ENCODE measurements at regions of chr21 and their contacts with region 1.

Region 1: GRCh38 chr21:33324291-33325221 is at the start of gene IFNAR1:
- DNase-seq: peak; percentile 99 to 100 (median 100)
- ATAC-seq: peak; percentile 95
- H3K4me3 ChIP-seq: peak within 1 kb of the TSS; percentile 75
- H3K27ac ChIP-seq: peak within 1 kb of the TSS; percentile 91
- H3K4me1 ChIP-seq: peaks cover 13 to 21% of the 10 kb centered on the region in 2 experiments; a peak in 3 of 5 replicates
- H3K27me3 ChIP-seq: no peaks in the 10 kb centered on the region
- CTCF ChIP-seq: peak in 2 of 3 experiments; percentile 14 to 16; a peak in 2 of 6 replicates
- EP300 ChIP-seq: no peak
- POLR2A ChIP-seq: peak; percentile 98
- RAD21 ChIP-seq: peak in 1 of 2 experiments; percentile 40; a peak in 3 of 4 replicates
- polyA plus RNA-seq, gene IFNAR1: 27.4 to 31.8 TPM

Region 2: DNA sequence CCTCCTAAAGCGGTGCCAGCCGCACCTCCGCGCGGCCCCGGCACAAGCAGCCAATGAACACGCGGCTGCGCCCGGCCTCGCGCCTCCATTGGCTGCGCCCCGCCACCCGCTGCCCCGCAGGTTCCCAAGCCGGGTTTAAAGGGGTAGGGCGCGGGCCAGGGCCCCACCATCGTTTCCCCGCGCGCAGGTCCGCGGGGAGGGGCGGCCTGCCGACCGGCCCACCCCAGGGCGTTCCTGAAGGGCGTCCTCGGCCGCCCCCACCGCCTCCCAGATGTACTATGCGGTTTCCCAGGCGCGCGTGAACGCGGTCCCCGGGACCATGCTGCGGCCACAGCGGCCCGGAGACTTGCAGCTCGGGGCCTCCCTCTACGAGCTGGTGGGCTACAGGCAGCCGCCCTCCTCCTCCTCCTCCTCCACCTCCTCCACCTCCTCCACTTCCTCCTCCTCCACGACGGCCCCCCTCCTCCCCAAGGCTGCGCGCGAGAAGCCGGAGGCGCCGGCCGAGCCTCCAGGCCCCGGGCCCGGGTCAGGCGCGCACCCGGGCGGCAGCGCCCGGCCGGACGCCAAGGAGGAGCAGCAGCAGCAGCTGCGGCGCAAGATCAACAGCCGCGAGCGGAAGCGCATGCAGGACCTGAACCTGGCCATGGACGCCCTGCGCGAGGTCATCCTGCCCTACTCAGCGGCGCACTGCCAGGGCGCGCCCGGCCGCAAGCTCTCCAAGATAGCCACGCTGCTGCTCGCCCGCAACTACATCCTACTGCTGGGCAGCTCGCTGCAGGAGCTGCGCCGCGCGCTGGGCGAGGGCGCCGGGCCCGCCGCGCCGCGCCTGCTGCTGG is 254.4 kb before region 1 on chr21 and contains the start of gene OLIG1:
- CTCF ChIA-PET with region 1: no interaction called
- POLR2A ChIA-PET with region 1: no interaction called
- in situ Hi-C with region 1: no loop called
- intact Hi-C with region 1: no loop called
- DNase-seq: no peak
- ATAC-seq: no peak
- H3K4me3 ChIP-seq: no peak within 1 kb of the TSS
- H3K27ac ChIP-seq: no peak within 1 kb of the TSS
- H3K4me1 ChIP-seq: peaks cover 0 to 22% of the 10 kb centered on the region in 2 experiments; a peak in 2 of 5 replicates
- H3K27me3 ChIP-seq: peaks cover 35 to 40% of the 10 kb centered on the region in 2 experiments
- CTCF ChIP-seq: no peak
- EP300 ChIP-seq: no peak
- POLR2A ChIP-seq: no peak
- RAD21 ChIP-seq: no peak
- polyA plus RNA-seq, gene OLIG1: not detected

Region 3: DNA sequence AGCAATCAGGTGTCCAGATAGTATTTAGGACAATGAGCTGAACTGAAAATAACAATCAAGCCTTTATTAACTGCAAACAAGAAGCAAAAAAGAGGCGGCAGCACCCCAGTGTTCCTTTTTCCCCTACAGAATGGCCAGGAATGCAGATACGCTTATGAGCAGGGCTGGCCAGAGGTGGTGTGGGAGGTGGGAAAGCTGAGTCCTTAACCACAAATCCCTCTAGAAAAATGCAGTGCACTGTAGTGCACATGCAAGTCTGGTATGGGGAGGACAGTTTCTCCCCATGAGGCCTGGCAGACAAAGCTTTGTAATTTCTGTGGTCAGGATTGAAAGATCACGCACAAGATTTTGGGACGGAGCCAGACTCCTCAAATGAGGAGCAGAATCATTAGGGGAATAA is 10.4 kb before region 1 on chr21:
- CTCF ChIA-PET with region 1: no interaction called
- POLR2A ChIA-PET with region 1: interaction called, 11 read pairs
- in situ Hi-C with region 1: no loop called
- intact Hi-C with region 1: no loop called
- DNase-seq: no peak
- ATAC-seq: no peak
- H3K4me3 ChIP-seq: no peak overlapping the region
- H3K27ac ChIP-seq: no peak overlapping the region
- H3K4me1 ChIP-seq: no peaks in the 10 kb centered on the region; a peak in 2 of 5 replicates
- H3K27me3 ChIP-seq: peaks cover 5 to 10% of the 10 kb centered on the region in 2 experiments; a peak in 4 of 5 replicates
- CTCF ChIP-seq: no peak
- EP300 ChIP-seq: no peak
- POLR2A ChIP-seq: no peak
- RAD21 ChIP-seq: no peak

Region 4: GRCh38 chr21:33334824-33335223 is 10.3 kb after region 1 on chr21:
- CTCF ChIA-PET with region 1: no interaction called
- POLR2A ChIA-PET with region 1: interaction called, 13 read pairs
- in situ Hi-C with region 1: no loop called
- intact Hi-C with region 1: no loop called
- DNase-seq: no peak
- ATAC-seq: no peak
- H3K4me3 ChIP-seq: no peak overlapping the region
- H3K27ac ChIP-seq: no peak overlapping the region
- H3K4me1 ChIP-seq: peaks cover 4 to 18% of the 10 kb centered on the region in 2 experiments; a peak in 4 of 5 replicates
- H3K27me3 ChIP-seq: no peaks in the 10 kb centered on the region
- CTCF ChIP-seq: no peak
- EP300 ChIP-seq: no peak
- POLR2A ChIP-seq: no peak
- RAD21 ChIP-seq: no peak

Region 5: GRCh38 chr21:33339918-33340317 is 15.4 kb after region 1 on chr21:
- CTCF ChIA-PET with region 1: no interaction called
- POLR2A ChIA-PET with region 1: interaction called, 13 read pairs
- in situ Hi-C with region 1: no loop called
- intact Hi-C with region 1: no loop called
- DNase-seq: no peak
- ATAC-seq: no peak
- H3K4me3 ChIP-seq: no peak overlapping the region
- H3K27ac ChIP-seq: no peak overlapping the region
- H3K4me1 ChIP-seq: no peaks in the 10 kb centered on the region
- H3K27me3 ChIP-seq: no peaks in the 10 kb centered on the region
- CTCF ChIP-seq: no peak
- EP300 ChIP-seq: no peak
- POLR2A ChIP-seq: no peak
- RAD21 ChIP-seq: no peak

Measured in K562 (cell line).